ENCODE measurements at regions of chr13 and their contacts with region 1.

Region 1: DNA sequence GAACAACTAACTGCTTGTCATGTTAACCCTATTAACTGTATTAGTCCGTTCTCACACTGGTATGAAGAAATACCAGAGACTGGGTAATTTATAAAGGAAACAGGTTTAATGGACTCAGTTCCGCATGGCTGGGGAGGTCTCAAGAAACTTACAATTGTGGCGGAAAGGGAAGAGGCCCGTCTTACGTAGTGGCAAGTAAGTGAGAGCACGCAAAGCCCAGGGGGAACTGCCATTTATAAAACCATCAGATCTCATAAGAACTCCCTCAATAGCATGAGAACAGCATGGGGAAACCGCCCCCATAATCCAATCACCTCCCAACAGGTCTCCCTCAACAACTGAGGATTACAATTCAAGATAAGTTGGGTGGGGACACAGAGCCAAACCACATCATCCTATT is 34.7 kb downstream of the PHF11 start:
- DNase-seq: peak; percentile 30
- ATAC-seq: peak; percentile 88
- H3K4me3 Mint-ChIP-seq: peak overlapping the region; percentile 67
- H3K27ac Mint-ChIP-seq: peak overlapping the region; percentile 89
- H3K4me1 Mint-ChIP-seq: peaks cover 73% of the 10 kb centered on the region
- H3K27me3 Mint-ChIP-seq: no peaks in the 10 kb centered on the region
- CTCF ChIP-seq: no peak

Region 2: GRCh38 chr13:49560270-49561050 is 30.0 kb after region 1 on chr13:
- CTCF ChIA-PET with region 1: no interaction called
- POLR2A ChIA-PET with region 1: no interaction called
- intact Hi-C with region 1: loop called (anchors 5 kb)
- DNase-seq: no peak
- ATAC-seq: no peak
- H3K4me3 Mint-ChIP-seq: no peak overlapping the region
- H3K27ac Mint-ChIP-seq: no peak overlapping the region
- H3K4me1 Mint-ChIP-seq: no peaks in the 10 kb centered on the region
- H3K27me3 Mint-ChIP-seq: no peaks in the 10 kb centered on the region
- CTCF ChIP-seq: no peak

Region 3: DNA sequence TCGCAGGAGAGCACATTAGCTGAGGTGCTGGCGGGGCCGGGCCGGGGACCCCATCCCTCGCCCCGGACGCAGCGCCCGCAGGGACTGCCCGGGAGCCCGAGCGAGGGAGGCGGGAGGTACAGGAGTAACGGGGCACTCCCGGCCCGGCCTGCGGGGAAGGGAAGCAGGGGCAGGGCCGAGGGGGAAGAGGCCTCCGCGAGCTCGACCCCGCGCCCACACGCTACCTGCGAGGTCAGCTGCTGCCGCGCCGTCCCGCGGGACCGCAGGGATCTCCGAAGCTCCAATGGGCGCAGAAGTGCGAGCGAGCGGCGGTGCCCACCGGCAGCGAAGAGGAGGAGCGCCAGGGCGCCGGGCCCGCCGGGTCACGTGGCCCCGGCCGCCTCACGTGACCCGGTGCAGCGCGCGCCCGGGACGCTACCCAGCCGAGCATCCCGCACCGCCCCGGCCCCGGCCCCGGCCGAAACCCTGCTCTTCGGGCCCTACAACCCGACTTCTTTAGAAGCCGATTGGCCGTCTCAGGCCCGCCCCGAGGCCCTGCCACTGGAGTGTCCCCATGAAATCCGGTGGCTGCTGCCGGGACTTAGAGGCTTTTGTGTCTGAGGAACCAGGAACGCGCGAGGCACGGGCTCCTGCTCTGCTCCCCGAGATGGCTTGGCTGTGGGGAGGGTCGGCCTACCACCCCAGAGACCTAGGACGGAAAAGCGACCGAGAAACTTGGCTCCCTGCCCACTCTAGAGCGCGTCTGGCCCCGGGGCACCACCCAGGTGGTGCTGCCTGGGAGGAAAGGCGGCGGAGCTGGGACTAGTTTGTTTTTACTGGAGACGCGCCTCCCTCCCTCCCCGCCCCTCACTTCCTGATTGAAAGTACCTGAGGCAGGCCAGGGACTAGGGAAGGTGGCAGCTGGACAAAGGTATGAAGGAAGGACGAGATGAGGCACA is 55.0 kb after region 1 on chr13 and contains the start of gene RCBTB1:
- CTCF ChIA-PET with region 1: no interaction called
- POLR2A ChIA-PET with region 1: interaction called, 6 read pairs
- intact Hi-C with region 1: loop called (anchors 2 kb)
- DNase-seq: peak; percentile 73
- ATAC-seq: peak; percentile 87
- H3K4me3 Mint-ChIP-seq: peak within 1 kb of the TSS; percentile 90
- H3K27ac Mint-ChIP-seq: peak within 1 kb of the TSS; percentile 86
- H3K4me1 Mint-ChIP-seq: peaks cover 31% of the 10 kb centered on the region
- H3K27me3 Mint-ChIP-seq: no peaks in the 10 kb centered on the region
- CTCF ChIP-seq: no peak
- total RNA-seq, gene RCBTB1: 19.7 and 22.6 TPM in 2 replicates

Region 4: DNA sequence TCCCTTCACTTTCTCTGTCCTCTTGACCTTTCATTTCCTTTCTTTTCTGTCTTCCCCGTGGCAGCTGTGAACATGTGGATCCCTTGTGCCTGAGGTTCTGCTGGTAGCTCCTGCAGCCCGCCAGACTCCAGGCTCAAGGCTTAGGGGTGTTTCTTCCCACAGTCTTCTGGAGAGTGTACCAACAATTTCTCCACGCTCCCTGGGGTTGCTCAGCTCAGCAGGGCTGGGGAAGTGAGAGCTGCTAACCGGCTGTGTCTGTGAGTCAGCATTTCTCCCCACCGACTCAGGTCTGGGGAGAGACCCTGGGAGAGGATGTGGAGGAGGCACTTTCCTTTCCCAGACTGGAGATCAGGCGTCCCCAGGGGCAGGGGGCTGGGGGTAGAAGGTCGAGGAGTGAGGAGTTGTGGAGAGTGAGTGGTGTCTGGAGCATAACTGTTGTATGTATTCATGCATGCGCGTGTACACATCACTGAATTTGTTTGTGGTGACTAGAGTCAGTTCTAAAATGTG is 678.4 kb after region 1 on chr13:
- CTCF ChIA-PET with region 1: no interaction called
- POLR2A ChIA-PET with region 1: no interaction called
- intact Hi-C with region 1: no loop called
- DNase-seq: peak; percentile 27
- ATAC-seq: peak; percentile 91
- H3K4me3 Mint-ChIP-seq: peak overlapping the region; percentile 74
- H3K27ac Mint-ChIP-seq: no peak overlapping the region
- H3K4me1 Mint-ChIP-seq: peaks cover 12% of the 10 kb centered on the region
- H3K27me3 Mint-ChIP-seq: no peaks in the 10 kb centered on the region
- CTCF ChIP-seq: no peak